ENCODE measurements at regions of chr10 and their contacts with region 1.

Region 1: GRCh38 chr10:86755740-86756510 is 494 bp upstream of the BMPR1A start:
- DNase-seq: peak; percentile 85
- H3K4me3 ChIP-seq: peak overlapping the region; percentile 63 to 69 (median 68)
- H3K27ac ChIP-seq: peak overlapping the region; percentile 87
- H3K4me1 ChIP-seq: peaks cover 18% of the 10 kb centered on the region
- H3K27me3 ChIP-seq: no peaks in the 10 kb centered on the region
- CTCF ChIP-seq: no peak

Region 2: DNA sequence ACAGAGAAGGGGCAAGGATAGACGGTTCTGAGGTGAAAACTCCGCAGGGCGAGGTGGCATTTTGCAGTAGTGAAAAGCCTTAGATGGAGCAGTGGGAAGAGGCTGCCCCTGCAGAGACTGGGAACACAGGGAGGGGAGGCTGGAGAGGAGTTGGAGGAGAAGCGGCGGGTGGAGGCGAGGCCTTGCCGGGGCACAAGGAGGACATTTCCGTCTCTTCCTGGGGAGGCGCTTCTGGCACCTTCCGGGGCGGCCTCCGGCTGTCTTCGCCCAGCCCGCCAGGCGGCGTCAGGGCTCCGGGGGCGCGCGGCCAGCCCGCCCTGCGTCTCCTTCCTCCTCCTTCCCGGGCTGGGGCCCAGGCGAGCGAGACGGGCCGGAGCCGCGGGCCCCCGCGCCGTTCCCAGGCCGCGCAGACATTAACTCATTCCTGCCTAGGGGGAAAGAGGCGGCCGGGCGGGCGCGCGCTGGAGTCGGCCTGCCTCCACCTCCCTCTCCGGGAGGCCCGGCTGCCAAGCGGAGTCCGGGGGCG is 44.9 kb before region 1 on chr10:
- CTCF ChIA-PET with region 1: interaction called, 5 read pairs
- dilution Hi-C with region 1: no loop called
- in situ Hi-C with region 1: no loop called
- intact Hi-C with region 1: loop called (anchors 1 kb)
- DNase-seq: peak; percentile 88
- H3K4me3 ChIP-seq: peak overlapping the region; percentile 63 to 72 (median 63)
- H3K27ac ChIP-seq: peak overlapping the region; percentile 48
- H3K4me1 ChIP-seq: peaks cover 15% of the 10 kb centered on the region
- H3K27me3 ChIP-seq: no peaks in the 10 kb centered on the region
- CTCF ChIP-seq: peak; percentile 50 to 77

Region 3: DNA sequence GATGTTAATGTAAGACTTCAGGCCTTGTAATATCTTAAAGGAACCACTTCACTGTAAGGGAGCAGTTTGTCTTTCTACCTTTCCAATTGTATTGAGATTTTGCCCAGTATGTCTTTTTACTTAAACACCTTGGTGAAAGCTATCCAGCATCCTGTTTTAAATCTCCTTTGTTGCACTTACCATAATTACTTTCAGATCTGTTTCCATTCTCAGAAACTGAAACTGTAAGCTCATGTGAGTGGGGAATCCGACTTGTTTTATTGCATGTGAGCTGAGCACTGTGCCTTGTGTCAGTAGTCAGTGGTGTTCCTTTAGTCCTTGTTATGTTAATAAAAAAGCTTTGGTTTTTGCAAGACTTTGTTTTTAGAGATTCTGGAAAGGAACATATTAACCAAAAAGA is 42.7 kb after region 1 on chr10:
- CTCF ChIA-PET with region 1: no interaction called
- dilution Hi-C with region 1: no loop called
- in situ Hi-C with region 1: no loop called
- intact Hi-C with region 1: loop called (anchors 5 kb)
- DNase-seq: no peak
- H3K4me3 ChIP-seq: no peak overlapping the region
- H3K27ac ChIP-seq: no peak overlapping the region
- H3K4me1 ChIP-seq: peaks cover 8% of the 10 kb centered on the region
- H3K27me3 ChIP-seq: no peaks in the 10 kb centered on the region
- CTCF ChIP-seq: no peak

Region 4: DNA sequence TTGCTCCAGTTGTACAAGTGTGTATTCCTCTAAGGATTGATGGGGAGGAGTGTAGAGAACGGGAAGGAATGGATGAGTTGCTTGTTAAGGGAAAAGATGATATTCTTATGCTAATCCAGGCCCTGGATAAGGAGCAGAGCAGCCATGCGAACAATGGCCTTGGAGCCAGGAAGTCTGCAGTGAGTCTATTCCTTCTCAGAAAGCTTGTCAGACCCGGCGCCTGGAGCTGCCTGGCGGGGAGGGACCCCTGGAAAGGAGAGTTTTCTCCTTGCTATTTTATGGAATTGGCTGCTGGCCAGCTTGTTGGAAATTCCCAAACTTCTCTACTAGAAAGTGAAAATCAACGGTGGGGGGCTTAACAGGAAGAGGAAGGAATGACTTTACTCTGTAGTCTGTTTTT is 112.4 kb after region 1 on chr10:
- CTCF ChIA-PET with region 1: interaction called, 3 read pairs
- dilution Hi-C with region 1: no loop called
- in situ Hi-C with region 1: no loop called
- intact Hi-C with region 1: loop called (anchors 5 kb)
- DNase-seq: no peak
- H3K4me3 ChIP-seq: no peak overlapping the region
- H3K27ac ChIP-seq: no peak overlapping the region
- H3K4me1 ChIP-seq: no peaks in the 10 kb centered on the region
- H3K27me3 ChIP-seq: no peaks in the 10 kb centered on the region
- CTCF ChIP-seq: no peak

Region 5: GRCh38 chr10:86899670-86900276 is 143.8 kb after region 1 on chr10:
- CTCF ChIA-PET with region 1: no interaction called
- dilution Hi-C with region 1: no loop called
- in situ Hi-C with region 1: no loop called
- intact Hi-C with region 1: loop called (anchors 2 kb)
- DNase-seq: peak; percentile 44
- H3K4me3 ChIP-seq: no peak overlapping the region
- H3K27ac ChIP-seq: no peak overlapping the region
- H3K4me1 ChIP-seq: no peaks in the 10 kb centered on the region
- H3K27me3 ChIP-seq: no peaks in the 10 kb centered on the region
- CTCF ChIP-seq: peak; percentile 72 to 88

Region 6: DNA sequence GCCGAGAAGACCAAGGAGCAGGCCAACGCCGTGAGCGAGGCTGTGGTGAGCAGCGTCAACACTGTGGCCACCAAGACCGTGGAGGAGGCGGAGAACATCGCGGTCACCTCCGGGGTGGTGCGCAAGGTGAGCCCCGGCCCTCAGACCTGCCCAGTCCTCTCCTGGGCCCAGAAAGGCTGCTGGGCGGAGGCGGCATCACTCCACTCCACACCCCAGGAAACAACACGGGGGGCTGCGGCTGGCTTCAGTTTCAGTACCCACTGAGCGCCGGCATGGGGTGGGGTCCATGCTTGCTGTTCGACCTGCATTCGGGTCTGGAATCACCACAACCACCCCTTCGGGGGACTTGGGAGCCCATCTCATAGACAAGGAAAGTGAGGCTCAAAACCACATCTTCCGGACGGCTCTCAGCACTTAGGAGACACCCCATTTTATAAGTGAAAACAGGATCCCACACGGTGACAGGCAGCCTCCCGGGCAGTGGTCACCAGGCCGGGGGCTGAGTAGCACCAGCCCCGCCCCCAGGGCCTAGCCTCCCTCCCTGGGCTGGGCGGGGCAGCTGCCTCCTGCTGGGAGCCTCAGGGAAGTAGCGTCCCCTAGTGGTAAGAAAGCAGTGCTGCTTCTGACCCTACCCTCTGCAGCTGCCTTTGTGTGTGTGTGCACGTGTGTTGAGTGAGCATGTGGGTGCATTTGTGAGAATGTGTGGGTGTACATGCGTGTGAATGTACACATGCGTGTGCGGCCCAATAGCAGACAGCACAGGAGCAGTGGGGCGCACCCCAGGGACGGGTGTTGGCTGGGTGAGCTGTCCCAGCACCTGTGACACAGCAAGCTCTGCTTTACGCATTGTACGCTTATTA is 204.3 kb after region 1 on chr10:
- CTCF ChIA-PET with region 1: no interaction called
- dilution Hi-C with region 1: no loop called
- in situ Hi-C with region 1: no loop called
- intact Hi-C with region 1: loop called (anchors 2 kb)
- DNase-seq: peak; percentile 49
- H3K4me3 ChIP-seq: no peak overlapping the region
- H3K27ac ChIP-seq: peak overlapping the region; percentile 71
- H3K4me1 ChIP-seq: peaks cover 51% of the 10 kb centered on the region
- H3K27me3 ChIP-seq: no peaks in the 10 kb centered on the region
- CTCF ChIP-seq: peak; percentile 99 to 100

Measured in mammary epithelial cell (primary cell).